ENCODE measurements at regions of chr3 and their contacts with region 1.

Region 1: GRCh38 chr3:138118612-138119422 is 3.4 kb upstream of the DZIP1L start:
- DNase-seq: peak; percentile 67
- ATAC-seq: peak; percentile 56
- H3K4me3 Mint-ChIP-seq: no peak overlapping the region
- H3K27ac Mint-ChIP-seq: no peak overlapping the region
- H3K4me1 Mint-ChIP-seq: peaks cover 8% of the 10 kb centered on the region
- H3K27me3 Mint-ChIP-seq: peaks cover 20% of the 10 kb centered on the region

Region 2: GRCh38 chr3:138082085-138082991 is 36.5 kb before region 1 on chr3:
- CTCF ChIA-PET with region 1: interaction called, 18 read pairs
- POLR2A ChIA-PET with region 1: no interaction called
- DNase-seq: peak; percentile 39
- ATAC-seq: peak; percentile 76
- H3K4me3 Mint-ChIP-seq: peak overlapping the region; percentile 46
- H3K27ac Mint-ChIP-seq: peak overlapping the region; percentile 68
- H3K4me1 Mint-ChIP-seq: peaks cover 38% of the 10 kb centered on the region
- H3K27me3 Mint-ChIP-seq: peaks cover 13% of the 10 kb centered on the region